A549 (cell line): ENCODE measurements at regions of chr5 and their contacts with region 1.

Region 1: DNA sequence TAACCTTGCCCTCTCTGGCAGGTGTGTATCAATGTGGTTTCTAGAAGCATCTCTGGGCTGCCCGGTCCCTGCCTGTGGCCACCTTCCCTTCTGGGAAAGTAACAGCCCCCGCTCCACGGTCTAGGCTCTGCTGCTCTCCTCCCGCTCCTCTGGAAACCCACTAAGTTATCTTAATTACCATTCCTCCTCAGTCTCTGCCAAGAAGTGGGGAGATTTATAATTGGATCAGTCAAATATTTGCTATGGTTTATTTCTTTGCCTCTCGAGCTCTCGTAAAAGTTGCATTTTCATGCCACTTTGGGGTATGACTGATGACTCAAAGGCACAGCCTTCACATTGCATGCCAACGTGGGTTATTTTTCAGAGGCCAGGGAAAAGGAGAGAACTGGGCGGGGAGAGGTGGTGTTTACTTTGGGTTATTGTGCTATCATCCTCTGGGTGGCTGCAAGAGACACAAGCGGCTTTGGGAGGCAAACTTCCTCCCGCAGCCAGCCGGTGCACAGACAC is 205.3 kb upstream of the WWC1 start:
- DNase-seq: peak; percentile 69 to 76
- ATAC-seq: peak; percentile 97 to 98
- H3K4me3 ChIP-seq: no peak overlapping the region
- H3K27ac ChIP-seq: peak overlapping the region in 1 of 2 experiments; percentile 40; a peak in 2 of 6 replicates
- H3K4me1 ChIP-seq: peaks cover 15% of the 10 kb centered on the region
- CTCF ChIP-seq: peak; percentile 19; the same call in 1 of the 3 replicates
- EP300 ChIP-seq: no peak
- POLR2A ChIP-seq: no peak
- RAD21 ChIP-seq: peak; percentile 33 to 39; a peak in 4 of 5 replicates

Region 2: GRCh38 chr5:168073991-168074800 is 12.0 kb before region 1 on chr5:
- CTCF ChIA-PET with region 1: interaction called, 11 read pairs
- POLR2A ChIA-PET with region 1: no interaction called
- DNase-seq: no peak
- ATAC-seq: no peak
- H3K4me3 ChIP-seq: no peak overlapping the region
- H3K27ac ChIP-seq: no peak overlapping the region
- H3K4me1 ChIP-seq: no peaks in the 10 kb centered on the region
- CTCF ChIP-seq: no peak
- EP300 ChIP-seq: no peak
- POLR2A ChIP-seq: no peak
- RAD21 ChIP-seq: no peak